ENCODE measurements at regions of chr2 and their contacts with region 1.

Region 1: DNA sequence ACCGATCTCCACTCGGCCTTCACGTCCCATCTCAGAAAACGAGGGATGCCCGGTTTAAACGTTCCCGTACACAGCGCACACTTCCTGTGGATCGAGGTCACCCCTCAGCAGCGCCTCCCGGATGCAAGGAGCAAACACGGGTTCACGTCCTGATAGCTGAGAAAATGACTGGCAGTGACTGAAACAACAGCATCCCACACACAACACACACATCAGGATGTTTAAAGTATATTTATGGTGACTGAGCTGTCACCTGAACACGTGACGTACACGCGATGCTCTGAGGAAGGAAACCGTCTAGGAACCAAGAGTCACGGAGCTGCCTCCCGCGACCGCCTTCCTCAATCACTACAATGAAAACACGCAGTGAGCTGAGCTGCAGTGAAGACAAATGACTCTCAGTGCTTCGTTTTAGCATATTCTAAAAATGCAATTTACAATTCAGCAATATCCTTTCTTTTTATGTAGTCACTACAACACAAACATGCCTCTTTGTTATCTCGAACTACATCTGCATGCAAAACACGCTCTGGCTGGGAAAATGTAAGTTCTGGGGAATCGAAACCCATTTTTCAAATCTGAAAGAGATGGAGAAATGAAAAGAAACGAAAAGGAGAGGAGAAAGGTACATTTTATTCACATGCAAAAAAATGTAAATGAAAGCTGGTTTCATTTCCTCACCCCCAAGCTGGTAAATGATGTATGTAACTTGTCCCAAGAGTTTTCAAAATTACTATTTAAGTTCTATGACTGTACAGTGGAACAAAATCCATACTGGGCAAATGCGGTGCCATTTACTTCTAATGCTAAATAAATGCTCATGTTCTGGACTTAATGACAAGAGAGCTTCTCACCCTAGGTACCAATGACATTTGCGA is 19.8 kb downstream of the HDAC4 start:
- DNase-seq: peak in 1 of 2 donors; percentile 49
- ATAC-seq: no peak
- H3K4me3 ChIP-seq: peak overlapping the region; percentile 15
- H3K27ac ChIP-seq: no peak overlapping the region
- H3K4me1 ChIP-seq: peaks cover 5% of the 10 kb centered on the region
- H3K27me3 ChIP-seq: no peaks in the 10 kb centered on the region
- CTCF ChIP-seq: no peak

Region 2: DNA sequence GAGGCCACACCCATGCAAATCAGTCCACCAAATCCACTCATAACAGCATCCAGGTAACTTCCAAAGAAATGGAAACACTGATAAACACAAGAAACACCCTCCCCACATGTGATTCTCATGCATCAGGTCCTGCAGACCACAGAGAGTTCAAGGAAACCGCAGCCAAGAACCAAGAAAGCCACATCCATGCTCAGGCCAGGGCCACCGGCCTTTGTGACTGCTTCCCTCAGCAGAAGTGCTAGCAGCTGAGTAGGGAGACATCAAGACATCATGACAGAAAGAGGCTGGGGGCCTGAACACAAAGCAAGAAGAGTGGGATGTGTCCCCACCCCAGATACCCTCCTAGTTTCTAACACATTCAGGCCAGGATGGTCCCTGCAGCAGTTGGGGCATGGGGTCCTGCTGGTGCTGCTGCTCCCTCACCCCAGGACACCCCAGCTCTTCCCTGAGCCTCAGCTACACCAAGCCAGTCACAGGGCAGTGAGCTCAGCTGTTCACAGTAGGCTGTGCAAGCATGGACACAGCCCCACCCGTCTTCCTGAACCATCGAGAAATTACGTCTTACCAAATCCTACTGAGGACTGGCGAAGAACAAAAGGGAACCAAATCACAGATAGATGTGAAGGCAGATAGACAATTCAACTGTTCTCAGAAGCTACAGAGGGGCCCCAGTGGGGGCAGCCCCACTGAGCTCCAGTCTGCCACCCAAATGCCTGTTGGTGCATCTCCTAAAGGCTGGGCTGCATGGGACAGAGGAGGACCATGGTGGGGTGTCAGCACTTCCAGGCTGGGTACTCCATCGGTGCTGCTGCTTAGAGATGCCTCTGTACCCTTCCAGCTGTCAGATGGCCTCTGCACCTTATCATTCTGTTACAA is 41.1 kb before region 1 on chr2:
- intact Hi-C with region 1: loop called in 1 of 2 experiments (anchors 5 kb)
- DNase-seq: no peak
- ATAC-seq: no peak
- H3K4me3 ChIP-seq: no peak overlapping the region
- H3K27ac ChIP-seq: no peak overlapping the region
- H3K4me1 ChIP-seq: no peaks in the 10 kb centered on the region
- H3K27me3 ChIP-seq: no peaks in the 10 kb centered on the region
- CTCF ChIP-seq: no peak

Region 3: DNA sequence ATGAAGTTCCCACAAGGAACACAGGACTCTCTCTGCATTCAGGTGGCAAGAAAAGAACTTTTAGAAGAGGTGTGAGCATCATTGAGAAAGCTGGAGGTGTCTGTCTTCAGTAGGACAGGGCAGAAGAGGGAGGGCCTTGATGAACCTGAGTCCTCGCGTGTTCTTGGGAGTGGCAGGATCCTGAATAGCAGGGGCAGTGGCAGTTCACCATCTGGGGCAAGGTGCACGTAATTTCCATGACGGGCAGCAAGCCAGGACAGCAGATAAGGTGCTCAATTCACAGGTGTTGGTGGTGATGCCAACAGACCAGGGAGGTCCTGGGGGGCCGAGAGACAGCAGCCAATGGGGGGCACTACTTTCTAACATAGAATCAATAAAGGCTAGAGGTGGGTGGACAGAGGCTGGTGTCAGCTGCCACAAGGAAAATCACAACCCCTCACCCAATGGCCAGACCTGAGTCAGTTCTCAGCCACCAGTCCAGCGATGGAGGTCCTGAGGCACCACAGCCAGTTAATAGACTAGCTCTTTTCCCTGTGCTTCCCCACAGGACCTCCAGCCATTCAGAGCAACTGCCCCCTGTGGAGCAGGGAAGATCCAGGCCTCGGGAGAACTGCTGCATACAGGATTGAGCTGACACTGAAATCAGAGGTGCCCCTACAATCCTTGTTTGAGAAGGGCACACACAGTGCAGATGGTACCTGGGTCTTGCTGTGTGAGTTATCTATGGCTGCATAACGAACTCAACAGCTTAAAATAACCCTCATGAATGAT is 30.7 kb after region 1 on chr2:
- intact Hi-C with region 1: loop called in 1 of 2 experiments (anchors 1 kb)
- DNase-seq: no peak
- ATAC-seq: no peak
- H3K4me3 ChIP-seq: no peak overlapping the region
- H3K27ac ChIP-seq: no peak overlapping the region
- H3K4me1 ChIP-seq: peaks cover 6% of the 10 kb centered on the region
- H3K27me3 ChIP-seq: no peaks in the 10 kb centered on the region
- CTCF ChIP-seq: no peak

Region 4: DNA sequence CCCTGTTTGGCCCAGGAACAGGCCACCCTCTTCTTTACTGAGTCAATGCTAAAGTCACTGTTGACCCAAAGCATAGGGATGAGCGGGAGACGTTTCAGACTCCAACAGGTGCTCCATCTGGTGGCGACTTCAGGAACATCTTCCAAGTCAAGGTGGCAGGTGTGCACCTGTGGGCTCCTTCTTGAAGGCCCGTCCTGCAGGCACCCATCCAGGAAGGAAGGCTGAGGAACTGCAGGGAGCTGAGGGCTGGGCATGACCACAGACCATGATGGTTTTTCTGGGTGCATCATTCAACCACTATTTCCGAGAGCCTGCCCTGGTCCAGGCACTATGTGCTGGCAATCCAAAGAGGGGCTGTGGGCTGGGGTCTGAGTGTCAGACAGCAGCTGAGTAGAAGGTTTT is 501.3 kb after region 1 on chr2:
- intact Hi-C with region 1: no loop called
- DNase-seq: no peak
- ATAC-seq: peak; percentile 54 to 86 (median 80)
- H3K4me3 ChIP-seq: no peak overlapping the region
- H3K27ac ChIP-seq: no peak overlapping the region
- H3K4me1 ChIP-seq: peaks cover 3% of the 10 kb centered on the region
- H3K27me3 ChIP-seq: no peaks in the 10 kb centered on the region
- CTCF ChIP-seq: peak; percentile 65